GM12878 (cell line): ENCODE measurements at regions of chr1 and their contacts with region 1.

Region 1: GRCh38 chr1:205631727-205632373 is at the start of gene ELK4:
- DNase-seq: peak; percentile 87
- ATAC-seq: peak; percentile 73
- H3K4me3 ChIP-seq: peak within 1 kb of the TSS; percentile 93
- H3K27ac ChIP-seq: peak within 1 kb of the TSS; percentile 74
- H3K4me1 ChIP-seq: peaks cover 13% of the 10 kb centered on the region
- H3K27me3 ChIP-seq: no peaks in the 10 kb centered on the region
- CTCF ChIP-seq: peak; percentile 70 to 98 (median 86); a peak in 5 of 6 replicates
- EP300 ChIP-seq: no peak; a peak in 1 of 4 replicates
- POLR2A ChIP-seq: peak; percentile 93
- RAD21 ChIP-seq: peak; percentile 79
- polyA plus RNA-seq, gene ELK4: 5.2 to 11.9 TPM

Region 2: DNA sequence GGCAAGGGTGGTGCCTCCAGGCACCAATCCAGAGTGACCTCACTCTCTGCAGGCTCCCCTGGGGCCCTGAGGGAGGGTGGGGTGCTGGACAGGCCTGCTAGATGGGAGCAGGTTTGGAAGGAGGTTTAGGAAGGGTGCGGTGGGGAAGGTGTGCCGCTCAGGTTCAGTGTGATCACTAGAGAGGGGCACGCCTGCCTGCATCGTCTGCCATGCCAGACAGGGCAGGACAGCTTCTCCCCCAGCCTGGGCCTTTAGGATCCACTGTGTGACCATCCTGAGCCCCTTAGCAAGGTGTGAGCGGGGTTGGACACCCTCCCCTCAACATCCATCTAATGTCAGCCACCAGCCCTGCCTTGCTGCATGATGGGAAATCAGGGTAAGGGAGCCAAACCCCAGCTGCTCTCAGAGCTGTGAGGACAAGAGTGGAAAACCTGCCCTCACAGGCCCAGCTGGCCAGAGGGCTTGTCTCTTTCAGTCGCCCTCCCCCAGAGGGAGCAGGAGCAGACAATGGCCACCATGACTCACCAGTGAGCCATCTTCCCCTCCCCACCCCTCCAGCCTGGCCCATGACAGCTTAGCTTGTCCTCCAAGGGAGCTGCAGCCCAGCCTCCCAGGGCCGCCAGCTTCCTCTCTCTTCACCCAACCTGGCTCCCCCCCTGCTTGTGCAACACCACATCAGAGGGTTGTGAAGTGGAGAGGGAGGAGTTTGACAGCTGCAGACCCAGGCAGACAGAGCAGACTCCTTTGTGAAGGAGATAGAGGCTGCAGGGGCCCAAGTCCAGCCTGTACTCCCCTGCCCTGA is 347.3 kb before region 1 on chr1:
- CTCF ChIA-PET with region 1: no interaction called
- POLR2A ChIA-PET with region 1: interaction called, 5 read pairs
- RAD21 ChIA-PET with region 1: interaction called, 3 read pairs
- SMC1A ChIA-PET with region 1: no interaction called
- in situ Hi-C with region 1: no loop called
- intact Hi-C with region 1: loop called (anchors 10 kb)
- DNase-seq: no peak
- ATAC-seq: peak; percentile 61
- H3K4me3 ChIP-seq: 0 out of 2 replicates have a peak overlapping the region, but pooled peaks have one; percentile 32
- H3K27ac ChIP-seq: no peak overlapping the region
- H3K4me1 ChIP-seq: peaks cover 64% of the 10 kb centered on the region
- H3K27me3 ChIP-seq: no peaks in the 10 kb centered on the region; a peak in 1 of 4 replicates
- CTCF ChIP-seq: 0 out of 6 replicates have a peak, but pooled peaks of 1 of the 3 experiments have one; percentile 0
- EP300 ChIP-seq: peak; percentile 33 to 42; a peak in 1 of 4 replicates
- POLR2A ChIP-seq: 0 out of 2 replicates have a peak, but pooled peaks have one; percentile 29
- RAD21 ChIP-seq: no peak

Region 3: GRCh38 chr1:205591522-205592351 is 40.1 kb before region 1 on chr1:
- CTCF ChIA-PET with region 1: interaction called, 408 read pairs
- POLR2A ChIA-PET with region 1: interaction called, 80 read pairs
- RAD21 ChIA-PET with region 1: interaction called, 381 read pairs
- SMC1A ChIA-PET with region 1: interaction called, 301 read pairs
- in situ Hi-C with region 1: no loop called
- intact Hi-C with region 1: loop called (anchors 1 kb)
- DNase-seq: peak; percentile 59
- ATAC-seq: peak; percentile 79
- H3K4me3 ChIP-seq: peak overlapping the region; percentile 66; the same call in 1 of the 2 replicates
- H3K27ac ChIP-seq: peak overlapping the region; percentile 71
- H3K4me1 ChIP-seq: peaks cover 36% of the 10 kb centered on the region
- H3K27me3 ChIP-seq: no peaks in the 10 kb centered on the region
- CTCF ChIP-seq: peak; percentile 98 to 99 (median 99); a peak in 5 of 6 replicates
- EP300 ChIP-seq: no peak
- POLR2A ChIP-seq: peak; percentile 69
- RAD21 ChIP-seq: peak; percentile 96

Region 4: GRCh38 chr1:205645519-205645918 is 13.7 kb after region 1 on chr1:
- CTCF ChIA-PET with region 1: interaction called, 10 read pairs
- POLR2A ChIA-PET with region 1: interaction called, 6 read pairs
- RAD21 ChIA-PET with region 1: interaction called, 5 read pairs
- SMC1A ChIA-PET with region 1: interaction called, 12 read pairs
- in situ Hi-C with region 1: no loop called
- intact Hi-C with region 1: no loop called
- DNase-seq: no peak
- ATAC-seq: no peak
- H3K4me3 ChIP-seq: no peak overlapping the region
- H3K27ac ChIP-seq: no peak overlapping the region
- H3K4me1 ChIP-seq: no peaks in the 10 kb centered on the region
- H3K27me3 ChIP-seq: no peaks in the 10 kb centered on the region
- CTCF ChIP-seq: no peak
- EP300 ChIP-seq: no peak
- POLR2A ChIP-seq: no peak
- RAD21 ChIP-seq: no peak

Region 5: GRCh38 chr1:205729945-205730610 is 98.2 kb after region 1 on chr1:
- CTCF ChIA-PET with region 1: no interaction called
- POLR2A ChIA-PET with region 1: no interaction called
- RAD21 ChIA-PET with region 1: no interaction called
- SMC1A ChIA-PET with region 1: no interaction called
- in situ Hi-C with region 1: no loop called
- intact Hi-C with region 1: no loop called
- DNase-seq: no peak
- ATAC-seq: no peak
- H3K4me3 ChIP-seq: no peak overlapping the region
- H3K27ac ChIP-seq: no peak overlapping the region
- H3K4me1 ChIP-seq: no peaks in the 10 kb centered on the region
- H3K27me3 ChIP-seq: no peaks in the 10 kb centered on the region
- CTCF ChIP-seq: no peak
- EP300 ChIP-seq: no peak
- POLR2A ChIP-seq: no peak
- RAD21 ChIP-seq: no peak

Region 6: DNA sequence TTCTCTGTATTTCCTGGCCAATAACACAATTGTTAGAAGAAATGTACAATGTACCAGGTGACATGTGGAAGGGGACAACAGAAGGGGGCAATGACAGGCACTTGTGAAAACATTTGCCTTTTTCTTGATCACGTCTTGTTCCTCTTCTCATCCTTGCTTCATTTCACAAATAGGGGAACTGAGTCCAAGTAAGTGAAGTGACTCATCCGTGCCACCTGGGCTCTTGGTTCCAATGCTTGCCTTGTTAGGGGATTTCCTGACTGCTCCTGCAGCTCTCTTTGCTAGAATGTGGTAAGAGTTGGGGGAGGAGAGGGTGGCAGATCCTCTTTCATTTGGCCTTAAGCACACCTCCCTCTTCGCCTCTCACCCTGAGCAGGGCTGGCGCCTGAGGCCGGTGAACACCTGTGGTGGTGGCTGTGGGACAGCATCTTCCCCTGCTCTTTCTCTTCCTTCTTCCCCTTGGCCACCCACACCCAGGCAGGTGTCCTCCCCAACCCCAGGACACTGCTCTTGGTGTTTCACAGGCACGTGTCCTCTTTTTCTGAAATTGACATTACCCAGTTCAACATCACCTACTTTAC is 418.9 kb after region 1 on chr1:
- CTCF ChIA-PET with region 1: no interaction called
- POLR2A ChIA-PET with region 1: no interaction called
- RAD21 ChIA-PET with region 1: interaction called, 3 read pairs
- SMC1A ChIA-PET with region 1: no interaction called
- in situ Hi-C with region 1: no loop called
- intact Hi-C with region 1: loop called (anchors 10 kb)
- DNase-seq: peak; percentile 100
- ATAC-seq: peak; percentile 88
- H3K4me3 ChIP-seq: no peak overlapping the region
- H3K27ac ChIP-seq: peak overlapping the region; percentile 91
- H3K4me1 ChIP-seq: peaks cover 53% of the 10 kb centered on the region
- H3K27me3 ChIP-seq: no peaks in the 10 kb centered on the region
- CTCF ChIP-seq: 0 out of 6 replicates have a peak, but pooled peaks of 1 of the 3 experiments have one; percentile 3
- EP300 ChIP-seq: peak; percentile 97 to 98
- POLR2A ChIP-seq: peak; percentile 69
- RAD21 ChIP-seq: 0 out of 2 replicates have a peak, but pooled peaks have one; percentile 15